ENCODE measurements at regions of chr15 and their contacts with region 1.

Region 1: GRCh38 chr15:82103468-82103867 is 57.6 kb upstream of the MEX3B start:
- DNase-seq: no peak
- H3K4me3 ChIP-seq: no peak overlapping the region
- H3K27ac ChIP-seq: no peak overlapping the region
- H3K4me1 ChIP-seq: peaks cover 13% of the 10 kb centered on the region
- H3K27me3 ChIP-seq: no peaks in the 10 kb centered on the region
- CTCF ChIP-seq: peak; percentile 16 to 43

Region 2: DNA sequence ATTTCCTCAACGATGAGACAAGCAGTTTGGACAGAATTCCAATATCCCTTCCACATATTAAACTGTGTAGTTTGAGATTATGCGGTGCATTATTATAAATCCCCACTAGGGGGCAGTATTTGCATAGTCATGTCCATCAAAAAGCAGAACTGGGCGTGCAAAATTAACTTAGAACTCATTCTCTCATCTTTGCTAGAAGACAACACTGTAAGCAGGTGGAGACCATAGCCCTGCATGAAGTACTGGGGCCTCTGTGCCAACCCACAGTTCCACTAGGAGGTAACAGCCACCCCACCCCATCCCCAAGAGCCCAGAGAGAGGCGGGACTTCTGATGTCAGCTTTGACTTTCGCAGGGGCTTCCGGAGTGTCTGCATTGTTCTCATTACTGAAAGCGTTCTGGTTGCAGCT is 622.8 kb before region 1 on chr15:
- CTCF ChIA-PET with region 1: no interaction called
- dilution Hi-C with region 1: no loop called
- in situ Hi-C with region 1: no loop called
- intact Hi-C with region 1: loop called (anchors 1 kb)
- DNase-seq: peak; percentile 27
- H3K4me3 ChIP-seq: no peak overlapping the region
- H3K27ac ChIP-seq: no peak overlapping the region
- H3K4me1 ChIP-seq: no peaks in the 10 kb centered on the region
- H3K27me3 ChIP-seq: no peaks in the 10 kb centered on the region
- CTCF ChIP-seq: peak; percentile 63 to 78